ENCODE measurements at regions of chr11 and their contacts with region 1.

Region 1: DNA sequence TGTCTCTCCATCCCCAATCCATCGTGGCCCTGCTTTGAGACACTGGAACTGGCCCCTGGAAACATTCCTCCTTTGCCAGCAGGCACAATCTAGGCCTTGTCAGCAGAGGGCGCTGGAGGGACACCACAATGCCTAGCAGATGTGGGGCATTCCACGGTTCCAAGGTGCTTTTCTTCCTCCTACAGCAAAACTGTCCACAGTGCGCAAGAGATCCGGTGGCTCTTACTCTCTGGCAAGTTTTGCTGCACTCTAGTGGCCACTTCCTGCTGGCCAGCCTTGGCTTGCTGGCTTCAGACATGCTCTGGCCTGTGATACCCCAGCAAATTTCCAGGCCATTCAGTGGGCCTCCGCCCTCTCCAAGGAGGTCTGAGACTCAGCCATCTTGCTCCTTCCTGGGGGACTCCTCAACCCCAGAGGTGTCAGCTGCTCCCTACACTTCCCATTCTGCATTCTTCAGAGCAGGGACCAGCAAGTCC is 17.1 kb upstream of the RBM4B start:
- DNase-seq: peak; percentile 90
- CTCF ChIP-seq: peak; percentile 88

Region 2: DNA sequence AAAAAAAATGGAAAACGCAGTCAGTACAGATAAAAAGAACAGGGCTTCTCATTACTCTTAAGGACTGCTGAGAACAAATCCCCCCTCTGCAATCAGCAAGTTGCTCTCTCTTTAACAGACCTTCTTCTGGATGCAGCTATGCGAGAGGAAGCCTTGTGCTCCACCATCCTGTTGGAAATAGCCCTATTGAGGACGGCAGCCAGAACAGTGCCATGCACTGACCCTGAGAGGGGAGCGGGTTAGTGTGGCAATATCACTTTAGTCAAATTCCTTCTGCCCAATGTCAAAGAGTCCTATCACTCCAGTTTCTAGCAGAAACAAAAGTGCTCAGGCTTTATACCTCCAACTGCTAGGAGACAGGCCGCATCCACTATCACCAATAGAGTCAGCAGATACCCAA is 24.0 kb before region 1 on chr11:
- CTCF ChIA-PET with region 1: no interaction called
- POLR2A ChIA-PET with region 1: no interaction called
- DNase-seq: no peak
- CTCF ChIP-seq: no peak

Region 3: DNA sequence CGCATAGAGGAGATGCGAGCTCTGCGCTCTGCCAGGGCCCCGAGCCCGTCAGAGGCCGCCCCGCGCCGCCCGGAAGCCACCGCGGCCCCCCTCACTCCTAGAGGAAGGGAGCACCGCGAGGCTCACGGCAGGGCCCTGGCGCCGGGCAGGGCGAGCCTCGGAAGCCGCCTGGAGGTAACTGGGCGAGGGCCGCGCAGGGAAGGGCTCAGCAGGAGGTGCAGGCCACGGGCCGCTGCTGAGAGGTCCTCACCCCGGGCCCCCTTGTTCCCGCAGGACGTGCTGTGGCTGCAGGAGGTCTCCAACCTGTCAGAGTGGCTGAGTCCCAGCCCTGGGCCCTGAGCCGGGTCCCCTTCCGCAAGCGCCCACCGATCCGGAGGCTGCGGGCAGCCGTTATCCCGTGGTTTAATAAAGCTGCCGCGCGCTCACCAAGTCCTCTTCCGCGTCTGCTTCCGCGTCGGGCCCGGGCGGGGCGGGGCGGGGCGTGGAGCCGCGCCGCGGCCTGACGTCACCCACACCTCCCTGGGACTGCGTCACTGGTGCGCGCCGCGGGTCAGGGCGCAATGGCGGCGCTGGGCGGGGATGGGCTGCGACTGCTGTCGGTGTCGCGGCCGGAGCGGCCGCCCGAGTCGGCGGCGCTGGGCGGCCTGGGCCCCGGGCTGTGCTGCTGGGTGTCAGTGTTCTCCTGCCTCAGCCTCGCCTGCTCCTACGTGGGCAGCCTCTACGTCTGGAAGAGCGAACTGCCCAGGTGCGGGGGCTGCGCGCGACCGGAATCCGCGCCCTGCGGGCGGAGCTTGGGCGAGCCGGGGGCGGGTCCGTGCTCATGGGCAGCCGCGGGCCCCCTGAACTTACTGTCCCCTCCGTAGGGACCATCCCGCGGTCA is 148.4 kb after region 1 on chr11 and contains the start of gene RCE1:
- CTCF ChIA-PET with region 1: interaction called, 241 read pairs
- POLR2A ChIA-PET with region 1: no interaction called
- DNase-seq: peak; percentile 97
- CTCF ChIP-seq: no peak

Region 4: GRCh38 chr11:66883016-66883968 is 188.5 kb after region 1 on chr11:
- CTCF ChIA-PET with region 1: interaction called, 20 read pairs
- POLR2A ChIA-PET with region 1: no interaction called
- DNase-seq: peak; percentile 71
- CTCF ChIP-seq: peak; percentile 80

Measured in GM10248 (cell line).